ENCODE measurements at regions of chr17 and their contacts with region 1.

Region 1: DNA sequence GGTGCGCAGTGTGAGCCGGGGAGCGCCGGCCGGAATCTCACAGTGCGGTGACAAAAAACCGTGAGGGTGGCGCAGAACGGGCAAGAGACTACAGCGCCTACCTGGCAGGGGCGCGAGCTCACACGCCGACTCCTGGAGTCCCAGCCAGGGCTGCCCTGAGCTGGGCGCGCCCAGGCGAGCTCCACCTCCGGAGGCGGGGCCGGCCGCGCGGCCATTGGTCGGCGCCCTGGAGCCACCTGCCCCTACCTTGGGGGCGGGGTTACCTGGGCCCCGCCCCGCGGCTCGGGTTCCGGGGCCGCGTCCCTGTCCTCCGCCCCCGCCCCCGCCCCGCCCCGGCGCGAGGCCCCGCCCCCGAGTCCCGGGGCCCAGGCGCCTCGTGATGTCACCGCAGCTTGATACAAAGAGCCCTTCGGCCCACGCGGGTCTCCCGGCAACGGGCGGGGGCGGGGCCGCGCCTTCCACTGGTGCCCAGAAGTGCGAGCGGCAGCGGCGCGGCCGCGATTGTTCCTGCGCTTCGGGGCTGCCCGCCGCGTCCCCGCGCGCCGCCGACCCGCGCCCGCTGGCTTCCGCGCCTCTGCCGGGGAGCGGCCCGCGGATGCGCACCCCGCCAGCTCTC is 96.3 kb downstream of the RAB11FIP4 start:
- DNase-seq: peak; percentile 89
- H3K4me3 Mint-ChIP-seq: peak overlapping the region; percentile 78
- H3K27ac Mint-ChIP-seq: peak overlapping the region; percentile 68
- H3K4me1 Mint-ChIP-seq: peaks cover 52% of the 10 kb centered on the region
- H3K27me3 Mint-ChIP-seq: peaks cover 2% of the 10 kb centered on the region

Region 2: DNA sequence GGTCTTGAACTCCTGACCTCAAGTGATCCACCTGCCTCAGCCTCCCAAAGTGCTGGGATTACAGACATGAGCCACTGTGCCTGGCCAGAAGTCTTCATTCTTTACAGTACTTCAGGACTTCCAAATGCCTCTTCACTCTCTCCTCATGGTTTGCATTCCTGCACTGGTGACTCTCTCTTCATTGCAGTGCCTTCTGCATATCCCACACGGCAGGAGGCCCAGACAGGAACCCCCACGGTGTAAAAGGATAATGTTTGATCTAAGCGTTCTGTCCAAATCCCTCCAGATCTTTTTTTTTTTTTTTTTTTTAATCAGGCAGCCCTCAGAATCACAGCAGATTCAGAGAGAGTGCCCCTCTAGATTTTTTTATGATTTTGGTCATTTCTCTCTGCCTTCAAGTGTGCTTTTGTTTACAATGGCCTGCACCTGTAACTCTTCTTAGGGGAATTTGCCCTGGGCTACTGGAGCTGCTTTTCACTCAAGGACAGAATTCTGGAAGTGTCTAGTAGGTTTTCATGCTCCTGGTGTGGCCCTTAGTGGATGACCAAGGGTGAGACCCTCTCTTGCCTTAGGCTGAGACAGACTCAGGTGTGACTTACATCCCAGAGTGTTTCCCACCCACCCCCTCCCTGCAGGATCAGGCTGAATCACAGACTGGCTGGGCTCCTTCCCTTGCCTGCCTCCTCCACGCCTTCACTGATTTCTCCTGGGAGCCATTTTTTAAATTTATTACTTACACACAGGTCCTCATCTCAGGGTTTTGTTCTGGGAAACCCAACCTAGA is 412.8 kb before region 1 on chr17:
- intact Hi-C with region 1: no loop called
- DNase-seq: no peak
- H3K4me3 Mint-ChIP-seq: no peak overlapping the region
- H3K27ac Mint-ChIP-seq: no peak overlapping the region
- H3K4me1 Mint-ChIP-seq: no peaks in the 10 kb centered on the region
- H3K27me3 Mint-ChIP-seq: peaks cover 2% of the 10 kb centered on the region

Region 3: GRCh38 chr17:31549525-31550388 is 62.0 kb after region 1 on chr17:
- intact Hi-C with region 1: loop called (anchors 1 kb)
- DNase-seq: peak; percentile 86
- H3K4me3 Mint-ChIP-seq: peak overlapping the region; percentile 92
- H3K27ac Mint-ChIP-seq: peak overlapping the region; percentile 89
- H3K4me1 Mint-ChIP-seq: peaks cover 15% of the 10 kb centered on the region
- H3K27me3 Mint-ChIP-seq: peaks cover 18% of the 10 kb centered on the region

Region 4: GRCh38 chr17:31696184-31696602 is 208.4 kb after region 1 on chr17:
- intact Hi-C with region 1: no loop called
- DNase-seq: no peak
- H3K4me3 Mint-ChIP-seq: no peak overlapping the region
- H3K27ac Mint-ChIP-seq: no peak overlapping the region
- H3K4me1 Mint-ChIP-seq: no peaks in the 10 kb centered on the region
- H3K27me3 Mint-ChIP-seq: peaks cover 9% of the 10 kb centered on the region